Gastrocnemius medialis (tissue), 4 donors: ENCODE measurements at regions of chr17 and their contacts with region 1.

Region 1: GRCh38 chr17:32349854-32350665 is at the start of gene ZNF207:
- DNase-seq: peak; percentile 96
- ATAC-seq: peak; percentile 96 to 98
- H3K4me3 ChIP-seq: peak within 1 kb of the TSS; percentile 67 to 96 (median 87)
- H3K27ac ChIP-seq: peak within 1 kb of the TSS; percentile 96 to 100 (median 98)
- H3K4me1 ChIP-seq: peaks cover 38 to 44% of the 10 kb centered on the region in 2 donors
- H3K27me3 ChIP-seq: no peaks in the 10 kb centered on the region
- CTCF ChIP-seq: no peak
- POLR2A ChIP-seq: peak; percentile 84 to 85
- total RNA-seq, gene ZNF207: 51.4 to 126 (median 82.4) TPM

Region 2: GRCh38 chr17:31877911-31878702 is 472.0 kb before region 1 on chr17:
- in situ Hi-C with region 1: loop called in 1 of 4 experiments (anchors 25 kb)
- intact Hi-C with region 1: no loop called
- DNase-seq: no peak
- ATAC-seq: no peak
- H3K4me3 ChIP-seq: no peak overlapping the region
- H3K27ac ChIP-seq: no peak overlapping the region
- H3K4me1 ChIP-seq: no peaks in the 10 kb centered on the region
- H3K27me3 ChIP-seq: no peaks in the 10 kb centered on the region
- CTCF ChIP-seq: no peak
- POLR2A ChIP-seq: no peak

Region 3: DNA sequence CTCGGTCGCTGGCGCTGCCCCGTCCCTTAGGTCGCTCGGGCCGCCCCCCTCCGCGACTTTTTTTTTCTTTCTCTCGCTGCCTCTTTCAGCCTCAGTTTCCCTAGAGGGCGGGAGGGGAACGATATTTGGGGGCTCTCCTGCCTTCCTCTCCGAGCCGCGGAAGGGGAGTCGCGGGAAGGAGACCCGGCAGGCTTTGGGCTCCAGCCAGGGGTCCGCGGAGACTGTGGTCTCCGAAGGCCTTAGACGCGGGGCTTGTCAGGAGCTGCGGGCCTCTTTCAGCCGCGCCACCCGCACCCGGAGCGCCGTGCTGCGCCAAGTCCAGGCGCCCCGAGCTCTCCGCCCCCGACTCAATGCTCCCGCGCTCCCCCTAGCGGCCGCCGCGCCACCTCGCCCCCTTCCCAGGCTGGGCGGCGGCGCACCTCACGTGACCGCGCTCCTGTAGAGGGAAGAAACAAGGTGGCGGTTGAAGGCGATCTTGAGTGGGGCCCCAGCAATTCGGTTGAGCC is 343.1 kb before region 1 on chr17 and contains the start of gene LRRC37B:
- in situ Hi-C with region 1: loop called in 1 of 4 experiments (anchors 25 kb)
- intact Hi-C with region 1: no loop called
- DNase-seq: peak; percentile 75 to 84
- ATAC-seq: peak; percentile 93 to 94
- H3K4me3 ChIP-seq: peak within 1 kb of the TSS; percentile 82 to 93 (median 88)
- H3K27ac ChIP-seq: peak within 1 kb of the TSS; percentile 82 to 92 (median 85)
- H3K4me1 ChIP-seq: peaks cover 15 to 21% of the 10 kb centered on the region in 2 donors
- H3K27me3 ChIP-seq: no peaks in the 10 kb centered on the region
- CTCF ChIP-seq: peak; percentile 78 to 98 (median 95)
- POLR2A ChIP-seq: peak in 1 of 2 donors; percentile 33
- total RNA-seq, gene LRRC37B: 3.8 to 7.9 (median 5.6) TPM

Region 4: GRCh38 chr17:32486111-32486700 is 136.1 kb after region 1 on chr17:
- in situ Hi-C with region 1: no loop called
- intact Hi-C with region 1: loop called (anchors 5 kb)
- DNase-seq: peak; percentile 46 to 71
- ATAC-seq: peak; percentile 72 to 73
- H3K4me3 ChIP-seq: peak overlapping the region; percentile 48 to 75 (median 55)
- H3K27ac ChIP-seq: peak overlapping the region; percentile 79 to 93 (median 86)
- H3K4me1 ChIP-seq: peaks cover 12 to 26% of the 10 kb centered on the region in 2 donors
- H3K27me3 ChIP-seq: no peaks in the 10 kb centered on the region
- CTCF ChIP-seq: no peak
- POLR2A ChIP-seq: peak in 1 of 2 donors; percentile 59

Region 5: DNA sequence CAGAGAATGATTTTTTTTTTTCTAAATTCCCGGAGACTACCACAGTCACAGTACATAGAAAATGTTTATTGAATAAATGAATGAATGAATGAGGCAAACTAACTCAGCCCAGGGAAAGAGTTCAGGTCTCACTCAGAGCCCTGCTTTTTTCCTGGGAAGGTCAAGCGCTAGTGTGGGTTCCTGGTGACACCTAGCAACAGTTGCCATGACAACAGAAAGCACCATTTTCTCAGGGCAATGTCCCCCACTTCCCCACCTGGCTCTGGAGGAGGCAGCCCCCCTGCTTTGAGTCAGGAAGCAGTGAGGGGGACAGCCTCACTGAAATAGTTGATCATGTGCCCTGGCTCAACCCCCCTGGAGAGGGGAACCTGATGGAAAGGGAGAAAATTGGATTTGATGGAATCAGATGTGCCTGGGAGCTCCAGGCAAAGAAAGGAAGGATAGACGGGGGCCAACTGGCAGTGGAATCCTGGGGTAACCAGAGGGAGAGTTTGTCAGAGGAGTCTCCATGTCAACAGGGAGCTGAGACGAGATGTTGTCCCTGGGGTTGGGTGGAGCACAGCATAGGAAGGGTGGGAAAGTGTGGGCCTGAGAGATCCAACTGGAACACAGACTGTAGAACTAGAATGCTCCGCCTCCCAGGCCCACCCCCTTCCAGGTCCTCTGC is 1662.8 kb after region 1 on chr17:
- in situ Hi-C with region 1: no loop called
- intact Hi-C with region 1: no loop called
- DNase-seq: no peak
- ATAC-seq: no peak
- H3K4me3 ChIP-seq: no peak overlapping the region
- H3K27ac ChIP-seq: no peak overlapping the region
- H3K4me1 ChIP-seq: no peaks in the 10 kb centered on the region
- H3K27me3 ChIP-seq: no peaks in the 10 kb centered on the region
- CTCF ChIP-seq: no peak
- POLR2A ChIP-seq: no peak